ENCODE measurements at regions of chr18 and their contacts with region 1.

Region 1: GRCh38 chr18:31658670-31659575 is 25.5 kb downstream of the B4GALT6 start:
- DNase-seq: peak; percentile 38
- H3K4me3 Mint-ChIP-seq: no peak overlapping the region
- H3K27ac Mint-ChIP-seq: peak overlapping the region; percentile 34
- H3K4me1 Mint-ChIP-seq: peaks cover 22% of the 10 kb centered on the region
- H3K27me3 Mint-ChIP-seq: peaks cover under 1% of the 10 kb centered on the region

Region 2: DNA sequence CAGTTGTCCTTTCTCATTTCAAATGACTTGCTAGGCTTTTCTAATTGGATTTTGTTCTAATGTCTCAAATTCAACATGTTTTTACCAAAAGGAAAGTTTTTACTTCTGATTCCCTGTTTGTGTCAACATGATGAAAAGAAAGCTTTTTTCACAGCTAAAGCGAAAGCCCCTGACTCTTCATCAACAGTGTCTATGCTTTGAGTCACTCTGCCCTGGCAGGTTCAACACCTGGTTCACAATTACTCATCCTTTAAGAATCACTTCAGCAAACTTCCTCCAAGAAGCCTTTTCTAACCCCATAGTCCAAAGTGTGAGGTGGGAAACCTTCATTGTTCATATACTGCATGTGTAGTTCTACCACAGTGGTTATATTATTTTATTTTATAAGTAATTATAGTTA is 168.5 kb before region 1 on chr18:
- CTCF ChIA-PET with region 1: no interaction called
- intact Hi-C with region 1: loop called (anchors 1 kb)
- DNase-seq: peak; percentile 37
- H3K4me3 Mint-ChIP-seq: no peak overlapping the region
- H3K27ac Mint-ChIP-seq: no peak overlapping the region
- H3K4me1 Mint-ChIP-seq: peaks cover 4% of the 10 kb centered on the region
- H3K27me3 Mint-ChIP-seq: peaks cover 10% of the 10 kb centered on the region

Region 3: GRCh38 chr18:31497837-31498573 is 160.9 kb before region 1 on chr18 and contains the start of gene DSG2:
- CTCF ChIA-PET with region 1: no interaction called
- intact Hi-C with region 1: loop called (anchors 2 kb)
- DNase-seq: peak; percentile 39
- H3K4me3 Mint-ChIP-seq: peak within 1 kb of the TSS; percentile 73
- H3K27ac Mint-ChIP-seq: no peak within 1 kb of the TSS
- H3K4me1 Mint-ChIP-seq: peaks cover 6% of the 10 kb centered on the region
- H3K27me3 Mint-ChIP-seq: peaks cover 39% of the 10 kb centered on the region
- total RNA-seq, gene DSG2: 0.45 to 0.49 TPM

Region 4: GRCh38 chr18:31685097-31686082 is 26.5 kb after region 1 on chr18:
- CTCF ChIA-PET with region 1: no interaction called
- intact Hi-C with region 1: loop called (anchors 1 kb)
- DNase-seq: peak; percentile 73
- H3K4me3 Mint-ChIP-seq: peak overlapping the region; percentile 84
- H3K27ac Mint-ChIP-seq: no peak overlapping the region
- H3K4me1 Mint-ChIP-seq: peaks cover 16% of the 10 kb centered on the region
- H3K27me3 Mint-ChIP-seq: peaks cover 38% of the 10 kb centered on the region

Region 5: GRCh38 chr18:32530947-32531651 is 872.2 kb after region 1 on chr18:
- CTCF ChIA-PET with region 1: no interaction called
- intact Hi-C with region 1: loop called (anchors 1 kb)
- DNase-seq: peak; percentile 40
- H3K4me3 Mint-ChIP-seq: no peak overlapping the region
- H3K27ac Mint-ChIP-seq: peak overlapping the region; percentile 9
- H3K4me1 Mint-ChIP-seq: peaks cover 17% of the 10 kb centered on the region
- H3K27me3 Mint-ChIP-seq: peaks cover 13% of the 10 kb centered on the region